Activated CD4-positive, alpha-beta T cell treated with anti-CD3 and anti-CD28 coated beads for 36 hours (primary cell): ENCODE measurements at regions of chr12 and their contacts with region 1.

Region 1: GRCh38 chr12:8860165-8860961 is 37.9 kb downstream of the A2ML1 start:
- DNase-seq: peak; percentile 51
- ATAC-seq: peak; percentile 71
- H3K4me3 Mint-ChIP-seq: no peak overlapping the region
- H3K27ac Mint-ChIP-seq: no peak overlapping the region
- H3K4me1 Mint-ChIP-seq: no peaks in the 10 kb centered on the region
- H3K27me3 Mint-ChIP-seq: no peaks in the 10 kb centered on the region

Region 2: GRCh38 chr12:8662593-8662992 is 197.8 kb before region 1 on chr12 and contains the start of gene MFAP5:
- CTCF ChIA-PET with region 1: interaction called, 10 read pairs
- POLR2A ChIA-PET with region 1: no interaction called
- intact Hi-C with region 1: loop called in 1 of 2 experiments (anchors 1 kb)
- DNase-seq: no peak
- ATAC-seq: no peak
- H3K4me3 Mint-ChIP-seq: no peak within 1 kb of the TSS
- H3K27ac Mint-ChIP-seq: no peak within 1 kb of the TSS
- H3K4me1 Mint-ChIP-seq: no peaks in the 10 kb centered on the region
- H3K27me3 Mint-ChIP-seq: peaks cover 4% of the 10 kb centered on the region
- total RNA-seq, gene MFAP5: not detected

Region 3: DNA sequence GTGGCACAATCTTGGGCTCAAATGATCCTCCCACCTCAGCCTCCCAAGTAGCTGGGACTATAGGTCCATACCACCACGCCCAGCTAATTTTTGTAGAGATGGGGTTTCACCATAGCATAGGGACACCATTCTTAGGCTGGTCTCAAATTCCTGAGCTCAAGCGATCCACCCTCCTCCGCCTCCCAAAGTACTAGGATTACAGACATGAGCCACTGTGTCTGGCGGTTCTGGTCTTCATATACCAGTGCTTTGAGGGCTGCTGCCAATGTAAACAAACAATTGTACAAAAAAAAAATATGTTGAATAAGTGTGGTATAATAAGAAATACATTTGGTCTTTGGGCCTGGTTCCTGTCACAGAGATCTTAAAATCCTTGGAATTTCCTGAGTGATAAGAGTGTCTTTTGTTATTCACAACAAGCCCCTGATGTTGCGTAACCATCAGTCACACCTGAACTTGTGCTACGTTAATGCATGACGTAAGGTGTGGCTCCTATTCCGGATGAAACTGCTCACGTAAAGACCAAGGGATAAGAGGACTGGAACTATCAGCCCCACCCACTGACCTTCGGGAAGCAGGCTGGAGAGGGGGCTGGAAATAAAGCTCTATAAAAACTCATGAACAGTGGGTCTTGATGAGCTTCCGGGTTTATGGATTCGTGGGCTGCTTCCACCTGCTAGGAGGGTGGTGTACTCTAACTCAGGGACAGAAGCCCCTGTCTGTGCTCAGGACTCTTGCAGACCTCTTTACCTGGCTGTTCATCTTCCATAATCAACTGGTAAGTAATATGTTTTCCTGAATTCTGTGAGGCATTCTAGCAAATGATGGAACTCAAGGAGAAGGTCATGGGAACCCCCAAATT is 179.1 kb before region 1 on chr12:
- CTCF ChIA-PET with region 1: interaction called, 10 read pairs
- POLR2A ChIA-PET with region 1: no interaction called
- intact Hi-C with region 1: loop called (anchors 1 to 2 kb)
- DNase-seq: no peak
- ATAC-seq: no peak
- H3K4me3 Mint-ChIP-seq: no peak overlapping the region
- H3K27ac Mint-ChIP-seq: no peak overlapping the region
- H3K4me1 Mint-ChIP-seq: no peaks in the 10 kb centered on the region
- H3K27me3 Mint-ChIP-seq: no peaks in the 10 kb centered on the region

Region 4: DNA sequence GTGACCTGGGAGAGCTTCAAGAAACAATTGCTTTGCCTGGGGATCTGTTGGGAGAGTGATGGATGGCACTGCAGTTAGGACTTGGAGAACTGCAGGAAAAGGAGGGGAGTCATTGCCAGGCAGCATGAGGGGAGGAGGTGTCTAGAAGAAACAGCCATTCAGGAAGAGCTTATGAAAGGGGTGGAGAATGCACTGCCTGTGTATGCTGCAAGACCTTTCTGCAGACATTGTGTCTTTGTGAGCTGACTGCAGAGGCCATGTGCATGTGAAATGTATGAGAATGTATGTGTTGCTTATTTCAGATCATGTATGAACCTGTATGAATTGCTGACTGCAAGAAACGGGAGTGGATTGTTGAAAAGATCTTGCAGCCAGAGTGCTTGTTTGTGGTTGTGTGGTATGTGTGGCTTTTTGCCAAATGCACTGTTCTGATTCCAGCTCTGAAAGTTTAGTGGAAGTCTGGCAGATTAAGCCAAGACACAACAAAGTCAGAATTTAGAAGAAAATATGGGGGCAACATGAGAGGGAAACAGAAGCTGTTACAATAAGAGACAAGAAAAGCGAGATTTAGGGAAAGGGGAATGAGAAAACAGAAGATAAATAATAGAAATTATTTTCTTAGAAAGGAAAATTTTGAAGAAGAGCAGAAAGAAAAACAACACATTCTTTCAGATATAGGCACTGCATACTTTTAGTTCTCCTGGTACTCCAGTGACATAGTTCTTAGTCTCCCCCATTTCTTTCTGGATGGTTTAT is 172.3 kb before region 1 on chr12:
- CTCF ChIA-PET with region 1: interaction called, 10 read pairs
- POLR2A ChIA-PET with region 1: no interaction called
- intact Hi-C with region 1: loop called in 1 of 2 experiments (anchors 2 kb)
- DNase-seq: no peak
- ATAC-seq: peak; percentile 39
- H3K4me3 Mint-ChIP-seq: no peak overlapping the region
- H3K27ac Mint-ChIP-seq: no peak overlapping the region
- H3K4me1 Mint-ChIP-seq: peaks cover 3% of the 10 kb centered on the region
- H3K27me3 Mint-ChIP-seq: no peaks in the 10 kb centered on the region